Sciatic nerve (tissue), 2 donors: ENCODE measurements at regions of chr4 and their contacts with region 1.

Region 1: DNA sequence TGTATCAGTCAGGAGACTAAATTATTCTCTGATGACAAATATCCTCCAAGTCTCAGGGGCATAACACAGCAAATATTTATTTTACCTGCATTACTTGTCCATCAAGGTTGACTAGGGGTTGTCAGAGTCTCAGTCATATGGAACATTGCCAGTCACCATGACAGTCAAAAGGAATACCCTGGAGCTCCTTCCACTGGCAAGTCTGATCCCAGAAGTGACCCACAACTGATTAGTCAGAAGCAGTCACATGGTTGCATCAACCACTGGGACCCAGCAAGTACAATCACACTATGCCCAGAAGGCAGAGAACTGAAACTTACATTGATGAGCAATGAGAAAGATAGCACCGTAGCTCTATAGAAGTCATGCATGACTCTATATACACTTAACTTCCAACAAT is 41.9 kb upstream of the SOD3 start:
- DNase-seq: no peak
- ATAC-seq: no peak

Region 2: DNA sequence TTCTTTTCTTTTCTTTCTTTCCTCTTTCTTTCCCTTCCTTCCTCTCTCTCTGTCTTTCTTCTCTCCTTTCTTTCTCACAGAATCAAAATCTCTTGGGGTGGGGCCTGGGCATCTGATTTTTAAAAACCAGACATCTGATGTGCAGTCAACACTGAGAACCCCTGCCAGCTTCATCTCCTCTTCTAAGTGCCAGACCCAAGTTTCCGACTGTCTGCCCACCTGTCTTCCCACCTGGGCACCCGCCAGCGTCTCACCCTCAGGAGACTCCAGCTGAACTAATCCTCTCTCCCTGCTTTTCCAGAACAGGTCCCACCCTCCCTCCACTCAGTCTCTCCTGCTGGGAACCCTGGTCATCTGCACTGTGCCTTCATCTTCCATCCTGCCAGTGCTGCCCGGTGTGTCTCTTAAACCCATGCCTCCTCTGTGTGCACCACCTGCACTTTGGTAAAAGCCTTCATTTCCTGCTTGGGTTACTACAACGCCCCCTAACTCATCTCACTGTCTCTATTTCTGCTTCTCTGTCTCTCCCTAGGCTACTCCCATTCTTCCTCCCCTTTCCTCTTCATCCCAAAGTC is 44.6 kb after region 1 on chr4:
- intact Hi-C with region 1: loop called (anchors 1 kb)
- DNase-seq: no peak
- ATAC-seq: no peak

Region 3: GRCh38 chr4:24824720-24825119 is 71.2 kb after region 1 on chr4:
- intact Hi-C with region 1: no loop called
- DNase-seq: no peak
- ATAC-seq: no peak